SK-N-SH (cell line): ENCODE measurements at regions of chr17 and their contacts with region 1.

Region 1: GRCh38 chr17:63697341-63698286 is 2.3 kb downstream of the LIMD2 start:
- DNase-seq: peak; percentile 71
- H3K4me3 ChIP-seq: no peak overlapping the region; a peak in 1 of 4 replicates
- H3K27ac ChIP-seq: peak overlapping the region; percentile 25 to 98; a peak in 3 of 4 replicates
- H3K4me1 ChIP-seq: peaks cover 9 to 72% of the 10 kb centered on the region in 2 experiments; a peak in 3 of 4 replicates
- H3K27me3 ChIP-seq: no peaks in the 10 kb centered on the region
- CTCF ChIP-seq: peak; percentile 66
- EP300 ChIP-seq: no peak
- RAD21 ChIP-seq: peak; percentile 26; the same call in 1 of the 2 replicates

Region 2: DNA sequence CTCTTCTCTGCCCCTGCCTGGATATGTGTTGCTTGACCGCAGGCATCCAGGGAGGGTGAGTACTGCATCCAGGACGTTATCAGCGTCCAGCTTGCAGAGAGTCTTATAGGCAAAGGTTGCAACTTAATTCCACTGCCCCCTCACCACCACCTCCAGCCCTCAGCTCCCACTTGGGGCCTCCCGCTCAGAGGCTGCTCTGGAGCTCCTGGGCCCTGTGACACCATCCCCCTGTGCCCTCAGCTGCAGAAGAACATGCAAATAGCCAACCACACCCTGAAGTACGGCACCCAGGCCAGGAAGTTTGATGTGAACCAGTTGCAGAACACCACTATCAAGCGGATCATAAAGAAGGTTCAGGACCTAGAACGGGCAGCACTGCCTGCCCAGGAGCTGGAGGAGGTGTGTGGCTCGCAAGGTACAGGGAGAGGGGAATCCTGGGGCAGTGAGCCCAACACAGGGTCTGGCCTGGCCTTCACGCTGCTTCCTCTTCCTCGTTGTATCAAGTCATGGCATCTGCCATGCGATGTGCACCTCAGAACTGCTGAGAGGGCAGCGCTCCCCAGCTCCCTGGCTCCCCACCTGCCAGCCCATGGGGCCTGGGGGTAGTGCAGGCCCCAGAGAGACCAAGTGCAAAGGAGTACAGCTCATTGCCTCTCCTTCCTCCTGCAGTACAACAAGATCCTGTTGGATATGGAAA is 211.1 kb before region 1 on chr17:
- CTCF ChIA-PET with region 1: no interaction called
- POLR2A ChIA-PET with region 1: no interaction called
- DNase-seq: peak; percentile 24
- H3K4me3 ChIP-seq: no peak overlapping the region
- H3K27ac ChIP-seq: no peak overlapping the region
- H3K4me1 ChIP-seq: peaks cover 0 to 2% of the 10 kb centered on the region in 2 experiments; a peak in 1 of 4 replicates
- H3K27me3 ChIP-seq: no peaks in the 10 kb centered on the region
- CTCF ChIP-seq: no peak
- EP300 ChIP-seq: no peak
- RAD21 ChIP-seq: no peak

Region 3: GRCh38 chr17:63571763-63572271 is 125.8 kb before region 1 on chr17:
- CTCF ChIA-PET with region 1: no interaction called
- POLR2A ChIA-PET with region 1: no interaction called
- DNase-seq: no peak
- H3K4me3 ChIP-seq: no peak overlapping the region
- H3K27ac ChIP-seq: peak overlapping the region in 1 of 2 experiments; percentile 71; a peak in 2 of 4 replicates
- H3K4me1 ChIP-seq: peaks cover 3 to 12% of the 10 kb centered on the region in 2 experiments; a peak in 3 of 4 replicates
- H3K27me3 ChIP-seq: no peaks in the 10 kb centered on the region
- CTCF ChIP-seq: no peak
- EP300 ChIP-seq: no peak
- RAD21 ChIP-seq: no peak

Region 4: DNA sequence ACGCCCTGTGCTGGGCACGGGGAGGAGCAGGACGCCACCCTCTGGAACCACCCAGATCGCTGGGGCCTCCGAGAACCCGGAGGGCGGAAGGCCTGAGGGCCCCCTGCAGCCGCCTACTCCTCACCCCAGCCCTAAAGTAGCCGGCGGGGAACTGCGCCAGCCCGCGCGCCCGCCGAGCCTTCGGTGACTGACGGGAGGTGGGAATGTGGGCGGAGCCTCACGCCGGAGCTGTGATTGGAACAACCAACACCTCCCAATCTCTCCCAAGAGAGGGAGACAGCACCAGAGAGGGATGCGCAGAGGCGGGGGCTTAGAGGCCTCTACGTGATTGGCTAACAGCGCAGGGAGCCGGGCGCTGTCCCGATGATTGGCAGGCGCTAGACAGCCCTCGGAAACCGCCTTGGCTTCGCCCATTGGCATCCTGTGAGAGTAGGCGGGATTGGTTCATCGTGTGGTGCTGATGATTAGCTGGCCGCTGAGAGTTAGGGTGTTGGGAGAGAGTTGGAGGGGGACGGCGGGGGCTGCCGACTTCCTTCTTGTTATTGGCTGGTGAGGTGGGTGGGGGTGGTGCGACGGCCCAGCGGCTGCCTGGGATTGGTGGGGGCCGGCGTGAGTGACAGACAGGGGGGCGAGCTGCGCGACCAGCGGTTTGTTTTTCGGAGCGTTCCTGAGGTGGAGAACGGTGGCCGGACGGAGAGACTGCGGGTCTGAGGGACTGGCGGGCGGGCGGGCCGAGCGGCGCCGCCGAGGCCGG is 75.7 kb before region 1 on chr17 and contains the start of gene MAP3K3:
- CTCF ChIA-PET with region 1: interaction called, 5 read pairs
- POLR2A ChIA-PET with region 1: interaction called, 10 read pairs
- DNase-seq: peak; percentile 99
- H3K4me3 ChIP-seq: peak within 1 kb of the TSS; percentile 79 to 87
- H3K27ac ChIP-seq: peak within 1 kb of the TSS; percentile 42 to 88; a peak in 3 of 4 replicates
- H3K4me1 ChIP-seq: peaks cover 13 to 14% of the 10 kb centered on the region in 2 experiments; a peak in 2 of 4 replicates
- H3K27me3 ChIP-seq: no peaks in the 10 kb centered on the region
- CTCF ChIP-seq: no peak; the same call in 1 of the 2 replicates
- EP300 ChIP-seq: peak in 1 of 2 experiments; percentile 29; a peak in 2 of 4 replicates
- RAD21 ChIP-seq: 0 out of 2 replicates have a peak, but pooled peaks have one; percentile 2
- polyA plus RNA-seq, gene MAP3K3: 25.3 and 26.5 TPM in 2 replicates

Region 5: DNA sequence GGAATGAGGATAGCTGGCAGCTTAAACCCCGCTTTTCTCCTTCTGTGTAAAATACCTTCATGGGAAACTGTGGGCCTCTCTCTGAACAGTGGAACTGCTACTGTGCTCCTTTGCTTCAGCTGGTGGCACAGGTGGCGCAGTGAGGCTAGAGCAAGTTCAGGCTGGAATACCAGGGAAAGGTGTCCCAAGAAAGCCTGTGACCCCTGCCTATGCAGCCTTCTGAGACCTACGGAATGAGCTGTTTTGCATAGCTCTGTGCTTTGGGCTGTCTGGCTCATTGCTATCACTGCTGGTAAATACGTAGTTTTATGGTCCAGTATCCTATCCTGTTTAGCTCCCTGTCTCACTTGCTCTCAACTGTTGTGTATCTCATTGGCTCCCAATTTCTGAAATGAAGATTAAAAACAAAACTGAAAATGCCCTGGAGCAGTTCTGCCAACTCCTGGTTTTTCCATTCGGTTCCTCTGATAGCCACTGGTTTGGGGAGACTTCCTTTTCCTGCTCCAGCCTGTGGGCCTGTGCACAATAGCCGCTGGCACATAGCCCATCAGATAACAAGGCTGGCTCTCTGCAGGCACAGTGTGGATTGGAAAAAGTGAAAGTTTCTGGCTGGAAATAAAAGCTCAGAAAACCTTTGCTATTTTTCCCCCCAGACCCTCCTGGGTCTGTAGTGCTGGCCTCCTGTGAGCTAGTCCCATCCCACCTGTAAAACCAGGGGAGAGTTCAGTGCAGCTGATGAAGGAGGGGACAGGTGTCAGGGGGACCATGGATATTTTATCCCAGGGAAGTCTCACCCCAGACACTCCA is 21.8 kb before region 1 on chr17:
- CTCF ChIA-PET with region 1: interaction called, 233 read pairs
- POLR2A ChIA-PET with region 1: interaction called, 36 read pairs
- DNase-seq: peak; percentile 85
- H3K4me3 ChIP-seq: peak overlapping the region in 1 of 2 experiments; percentile 45; a peak in 3 of 4 replicates
- H3K27ac ChIP-seq: peak overlapping the region; percentile 65 to 97
- H3K4me1 ChIP-seq: peaks cover 26 to 38% of the 10 kb centered on the region in 2 experiments
- H3K27me3 ChIP-seq: no peaks in the 10 kb centered on the region
- CTCF ChIP-seq: no peak
- EP300 ChIP-seq: peak; percentile 52 to 86; a peak in 3 of 4 replicates
- RAD21 ChIP-seq: peak; percentile 42

Region 6: DNA sequence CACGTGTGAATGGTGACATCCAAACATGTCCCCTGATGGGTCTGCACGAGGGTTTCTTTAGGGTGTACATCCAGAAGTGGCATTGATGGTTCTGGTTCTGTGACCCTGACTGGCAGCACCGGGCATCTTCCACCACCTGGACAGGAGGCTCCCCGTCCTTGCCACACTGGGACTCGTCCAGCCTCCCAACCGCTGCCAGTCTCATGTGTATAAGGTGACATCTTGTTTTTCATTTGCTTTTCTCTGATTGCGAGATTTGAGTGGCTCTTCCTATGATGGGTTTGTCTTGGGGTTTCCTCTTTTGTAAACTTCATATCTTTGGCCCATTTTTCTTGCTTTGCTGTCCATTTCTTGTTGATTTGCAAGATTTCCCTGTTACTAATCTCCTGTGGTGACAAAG is 11.5 kb after region 1 on chr17:
- CTCF ChIA-PET with region 1: interaction called, 18 read pairs
- POLR2A ChIA-PET with region 1: interaction called, 6 read pairs
- DNase-seq: no peak
- H3K4me3 ChIP-seq: no peak overlapping the region
- H3K27ac ChIP-seq: no peak overlapping the region
- H3K4me1 ChIP-seq: peaks cover 0 to 8% of the 10 kb centered on the region in 2 experiments; a peak in 1 of 4 replicates
- H3K27me3 ChIP-seq: no peaks in the 10 kb centered on the region
- CTCF ChIP-seq: no peak
- EP300 ChIP-seq: no peak
- RAD21 ChIP-seq: no peak

Region 7: GRCh38 chr17:63714547-63715277 is 17.1 kb after region 1 on chr17:
- CTCF ChIA-PET with region 1: interaction called, 18 read pairs
- POLR2A ChIA-PET with region 1: interaction called, 6 read pairs
- DNase-seq: no peak
- H3K4me3 ChIP-seq: no peak overlapping the region
- H3K27ac ChIP-seq: no peak overlapping the region
- H3K4me1 ChIP-seq: no peaks in the 10 kb centered on the region
- H3K27me3 ChIP-seq: no peaks in the 10 kb centered on the region
- CTCF ChIP-seq: no peak
- EP300 ChIP-seq: no peak
- RAD21 ChIP-seq: no peak